ENCODE measurements at regions of chr11 and their contacts with region 1.

Region 1: DNA sequence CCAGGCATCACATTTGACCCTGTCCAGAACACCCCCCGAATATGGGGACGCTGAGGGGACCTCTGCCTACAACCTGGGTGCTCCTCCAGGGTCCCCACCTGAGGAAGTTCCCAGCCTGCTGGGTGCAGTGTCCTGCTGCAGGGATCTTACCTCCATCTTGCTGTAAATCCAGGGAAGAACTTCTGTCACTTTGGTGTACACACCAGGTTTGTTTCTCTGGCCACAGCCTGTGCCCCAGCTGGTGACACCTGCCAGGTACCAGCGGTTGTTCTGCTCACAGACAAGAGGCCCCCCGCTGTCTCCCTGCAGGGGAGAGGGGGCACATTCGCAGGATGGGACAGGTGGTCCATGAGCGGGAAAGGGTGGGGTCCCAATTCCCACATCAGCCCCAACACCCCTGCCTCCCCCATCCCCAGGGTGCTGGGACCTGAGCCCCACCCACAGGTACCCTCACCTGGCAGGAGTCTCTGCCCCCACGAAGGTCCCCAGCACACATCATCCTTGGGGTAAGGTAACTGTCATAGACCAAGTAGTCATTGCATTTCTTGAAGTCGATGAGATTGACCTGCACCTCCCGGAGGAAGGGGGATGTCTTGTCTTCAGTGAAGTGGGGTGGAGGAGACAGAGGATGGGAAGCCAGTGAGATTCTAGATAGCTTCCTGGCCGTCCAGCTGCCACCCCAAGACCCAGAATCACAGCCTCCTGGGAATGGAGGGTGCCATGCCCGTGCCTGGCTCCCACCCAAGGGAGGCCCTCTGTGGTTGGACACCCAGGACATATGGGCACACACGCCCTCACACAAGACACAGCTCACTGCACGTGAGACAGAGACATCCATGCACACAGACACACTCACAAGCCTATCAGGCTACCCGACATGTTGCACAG is 25.5 kb downstream of the TMPRSS13 start:
- DNase-seq: peak; percentile 13
- H3K4me3 Mint-ChIP-seq: no peak overlapping the region
- H3K27ac Mint-ChIP-seq: no peak overlapping the region
- H3K4me1 Mint-ChIP-seq: peaks cover 13% of the 10 kb centered on the region
- H3K27me3 Mint-ChIP-seq: peaks cover 40% of the 10 kb centered on the region

Region 2: DNA sequence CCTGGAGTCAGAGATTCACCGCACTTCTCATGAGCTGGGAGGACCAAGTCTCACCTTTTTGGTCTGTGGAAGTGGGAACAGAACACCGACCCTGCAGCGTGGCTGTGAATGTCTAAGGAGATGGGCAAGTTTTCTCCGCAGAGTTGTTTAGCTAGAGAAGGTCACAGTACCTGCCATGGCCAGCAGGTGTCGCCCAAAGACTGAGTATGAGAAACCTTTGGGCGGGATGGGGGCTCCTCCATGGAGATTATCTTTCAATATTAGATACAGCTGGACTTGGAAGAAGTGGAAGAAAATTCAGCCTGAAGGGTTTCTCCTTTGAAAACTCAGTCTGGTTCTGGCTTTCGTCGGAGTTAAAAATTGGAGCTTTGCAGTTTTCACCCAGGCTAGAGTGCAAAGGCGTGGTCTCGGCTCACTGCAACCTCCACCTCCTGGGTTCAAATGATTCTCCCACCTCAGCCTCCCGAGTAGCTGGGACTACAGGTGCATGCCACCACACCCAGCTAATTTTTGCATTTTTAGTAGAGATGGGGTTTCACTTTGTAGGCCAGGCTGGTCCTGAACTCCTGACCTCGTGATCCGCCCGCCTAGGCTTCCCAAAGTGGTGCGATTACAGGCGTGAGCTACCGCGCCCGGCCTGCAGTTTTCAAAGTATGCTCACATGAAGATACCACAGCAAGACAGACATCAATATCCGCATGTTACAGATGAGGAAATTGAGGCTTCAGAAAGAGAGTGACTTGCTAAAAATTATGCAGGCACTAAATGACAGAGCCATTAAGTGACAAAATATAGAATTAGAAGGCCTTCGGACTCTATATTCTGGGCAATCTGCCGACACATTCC is 96.0 kb before region 1 on chr11:
- CTCF ChIA-PET with region 1: interaction called, 13 read pairs
- DNase-seq: peak; percentile 83
- H3K4me3 Mint-ChIP-seq: no peak overlapping the region
- H3K27ac Mint-ChIP-seq: no peak overlapping the region
- H3K4me1 Mint-ChIP-seq: peaks cover 9% of the 10 kb centered on the region
- H3K27me3 Mint-ChIP-seq: peaks cover 53% of the 10 kb centered on the region